ENCODE measurements at regions of chr15 and their contacts with region 1.

Region 1: GRCh38 chr15:75809986-75810750 is 33.1 kb upstream of the UBE2Q2 start:
- DNase-seq: no peak
- ATAC-seq: no peak

Region 2: DNA sequence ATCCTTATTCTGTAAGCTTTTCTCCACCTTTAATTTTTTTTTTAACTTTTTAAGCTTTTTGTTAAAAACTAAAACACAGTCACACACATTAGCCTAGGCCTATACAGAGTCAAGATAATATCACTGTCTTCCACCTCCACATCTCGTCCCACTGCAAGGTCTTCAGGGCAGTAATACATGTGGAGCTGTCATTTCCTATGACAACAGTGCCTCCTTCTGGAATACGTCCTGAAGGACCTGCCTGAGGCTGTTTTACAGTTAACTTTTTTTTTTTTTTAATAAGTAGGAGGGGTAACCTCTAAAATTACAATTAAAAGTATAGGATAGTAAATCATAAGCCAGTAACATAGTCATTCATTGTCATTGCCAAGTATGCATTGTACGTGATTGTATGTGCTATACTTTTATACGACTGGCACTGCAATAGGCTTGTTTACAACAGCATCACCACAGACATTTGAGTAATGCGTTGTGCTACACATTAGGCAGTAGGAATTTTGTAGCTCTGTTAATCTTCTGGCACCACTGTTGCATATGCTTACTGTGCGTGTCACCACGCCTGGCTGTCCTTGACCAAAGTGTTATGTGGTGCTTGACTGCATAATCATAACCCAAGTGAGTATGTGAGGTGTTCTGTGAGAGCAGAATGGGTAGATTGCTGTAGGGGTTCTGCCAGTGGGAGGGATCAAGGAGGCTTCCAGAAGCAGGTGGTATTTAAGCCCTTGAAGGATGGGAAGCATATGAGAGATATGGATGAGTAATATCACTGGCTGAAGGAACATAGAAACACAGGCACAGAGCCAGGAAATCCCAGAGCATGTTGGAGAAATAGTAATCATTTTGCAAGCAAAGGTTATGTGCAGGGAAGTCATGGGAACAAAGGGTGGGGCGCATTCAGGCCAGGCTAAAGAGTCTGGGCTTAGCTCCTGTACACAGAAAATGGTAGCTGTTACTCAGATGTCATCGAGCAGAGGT is 111.8 kb after region 1 on chr15:
- intact Hi-C with region 1: loop called (anchors 5 kb)
- DNase-seq: no peak
- ATAC-seq: peak; percentile 76

Measured in Right ventricle myocardium inferior (tissue), 1 donor.